Activated T-helper 1 cell treated with anti-CD3 and anti-CD28 coated beads, Interleukin-12 subunit alpha, Interleukin-12 subunit beta, Interleukin-2, Interleukin-4 antibody, amounts not matched to agents 30 ng/mL and 10 ng/mL and 1 ng/mL, durations not matched to agents 14 hours and 24 hours and 36 hours (primary cell): ENCODE measurements at regions of chr20 and their contacts with region 1.

Region 1: DNA sequence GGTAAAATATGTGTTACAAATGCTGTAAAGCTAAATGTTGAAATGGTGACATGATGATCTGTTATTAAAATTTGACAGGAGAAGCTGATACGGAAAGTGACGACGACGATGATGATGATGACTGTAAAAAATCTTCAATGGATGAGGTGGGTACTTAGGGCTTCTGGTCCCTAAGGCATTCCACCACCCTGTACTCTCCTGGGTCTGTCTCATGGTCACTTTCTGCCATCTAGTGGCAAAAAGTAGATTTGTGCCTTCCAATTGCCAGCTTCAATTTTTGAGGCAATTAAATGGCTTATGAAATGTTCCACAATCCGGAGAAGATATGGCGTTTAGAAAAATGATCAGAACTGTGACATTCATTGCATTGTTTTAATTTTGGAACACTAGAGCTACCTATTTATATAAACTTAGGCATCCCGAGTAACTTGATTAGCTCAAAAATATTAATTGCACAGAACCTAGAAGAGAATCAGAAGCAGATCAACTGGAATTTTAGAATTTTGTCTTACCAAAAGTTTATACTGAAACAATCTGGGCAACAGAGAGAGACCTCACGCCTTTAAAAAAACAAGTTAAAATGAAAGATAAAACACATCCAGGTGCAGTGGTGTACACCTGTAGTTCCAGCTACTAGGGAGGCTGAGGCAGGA is 346.5 kb upstream of the PLCB4 start:
- DNase-seq: no peak
- H3K4me3 Mint-ChIP-seq: no peak overlapping the region
- H3K27ac Mint-ChIP-seq: no peak overlapping the region
- H3K4me1 Mint-ChIP-seq: no peaks in the 10 kb centered on the region
- H3K27me3 Mint-ChIP-seq: no peaks in the 10 kb centered on the region

Region 2: GRCh38 chr20:6828794-6829423 is 1893.5 kb before region 1 on chr20:
- intact Hi-C with region 1: loop called (anchors 5 kb)
- DNase-seq: no peak
- H3K4me3 Mint-ChIP-seq: no peak overlapping the region
- H3K27ac Mint-ChIP-seq: no peak overlapping the region
- H3K4me1 Mint-ChIP-seq: no peaks in the 10 kb centered on the region
- H3K27me3 Mint-ChIP-seq: no peaks in the 10 kb centered on the region

Region 3: GRCh38 chr20:8305449-8305978 is 416.9 kb before region 1 on chr20:
- intact Hi-C with region 1: loop called (anchors 1 kb)
- DNase-seq: peak; percentile 52
- H3K4me3 Mint-ChIP-seq: no peak overlapping the region
- H3K27ac Mint-ChIP-seq: no peak overlapping the region
- H3K4me1 Mint-ChIP-seq: no peaks in the 10 kb centered on the region
- H3K27me3 Mint-ChIP-seq: no peaks in the 10 kb centered on the region

Region 4: GRCh38 chr20:8389381-8390036 is 332.9 kb before region 1 on chr20:
- intact Hi-C with region 1: loop called (anchors 2 kb)
- DNase-seq: no peak
- H3K4me3 Mint-ChIP-seq: no peak overlapping the region
- H3K27ac Mint-ChIP-seq: no peak overlapping the region
- H3K4me1 Mint-ChIP-seq: peaks cover 7% of the 10 kb centered on the region
- H3K27me3 Mint-ChIP-seq: peaks cover under 1% of the 10 kb centered on the region

Region 5: DNA sequence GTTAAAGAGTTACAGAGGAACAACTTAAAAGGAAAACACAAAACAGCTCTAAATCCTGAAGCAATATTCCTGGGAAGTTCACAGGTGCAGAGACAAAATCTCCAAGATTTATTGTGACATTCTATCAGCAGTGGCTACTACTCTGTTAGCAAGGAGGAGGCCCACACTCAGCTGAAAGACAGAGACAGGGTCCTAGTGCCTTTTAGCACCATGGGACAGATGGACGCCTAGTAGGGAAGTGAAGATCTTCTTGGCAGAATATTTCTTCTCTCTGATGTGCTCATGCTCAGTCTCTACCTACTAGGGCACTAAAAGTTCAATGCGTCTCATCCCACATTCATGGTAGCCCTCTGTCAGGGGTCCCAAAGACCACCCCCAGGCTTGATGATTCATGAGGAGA is 925.3 kb after region 1 on chr20:
- intact Hi-C with region 1: no loop called
- DNase-seq: no peak
- H3K4me3 Mint-ChIP-seq: no peak overlapping the region
- H3K27ac Mint-ChIP-seq: no peak overlapping the region
- H3K4me1 Mint-ChIP-seq: no peaks in the 10 kb centered on the region
- H3K27me3 Mint-ChIP-seq: no peaks in the 10 kb centered on the region